Activated CD4-positive, alpha-beta memory T cell treated with anti-CD3 and anti-CD28 coated beads, Interleukin-2, amount 10 ng/mL, durations not matched to agents 7 days and 5 days (primary cell): ENCODE measurements at regions of chr17 and their contacts with region 1.

Region 1: DNA sequence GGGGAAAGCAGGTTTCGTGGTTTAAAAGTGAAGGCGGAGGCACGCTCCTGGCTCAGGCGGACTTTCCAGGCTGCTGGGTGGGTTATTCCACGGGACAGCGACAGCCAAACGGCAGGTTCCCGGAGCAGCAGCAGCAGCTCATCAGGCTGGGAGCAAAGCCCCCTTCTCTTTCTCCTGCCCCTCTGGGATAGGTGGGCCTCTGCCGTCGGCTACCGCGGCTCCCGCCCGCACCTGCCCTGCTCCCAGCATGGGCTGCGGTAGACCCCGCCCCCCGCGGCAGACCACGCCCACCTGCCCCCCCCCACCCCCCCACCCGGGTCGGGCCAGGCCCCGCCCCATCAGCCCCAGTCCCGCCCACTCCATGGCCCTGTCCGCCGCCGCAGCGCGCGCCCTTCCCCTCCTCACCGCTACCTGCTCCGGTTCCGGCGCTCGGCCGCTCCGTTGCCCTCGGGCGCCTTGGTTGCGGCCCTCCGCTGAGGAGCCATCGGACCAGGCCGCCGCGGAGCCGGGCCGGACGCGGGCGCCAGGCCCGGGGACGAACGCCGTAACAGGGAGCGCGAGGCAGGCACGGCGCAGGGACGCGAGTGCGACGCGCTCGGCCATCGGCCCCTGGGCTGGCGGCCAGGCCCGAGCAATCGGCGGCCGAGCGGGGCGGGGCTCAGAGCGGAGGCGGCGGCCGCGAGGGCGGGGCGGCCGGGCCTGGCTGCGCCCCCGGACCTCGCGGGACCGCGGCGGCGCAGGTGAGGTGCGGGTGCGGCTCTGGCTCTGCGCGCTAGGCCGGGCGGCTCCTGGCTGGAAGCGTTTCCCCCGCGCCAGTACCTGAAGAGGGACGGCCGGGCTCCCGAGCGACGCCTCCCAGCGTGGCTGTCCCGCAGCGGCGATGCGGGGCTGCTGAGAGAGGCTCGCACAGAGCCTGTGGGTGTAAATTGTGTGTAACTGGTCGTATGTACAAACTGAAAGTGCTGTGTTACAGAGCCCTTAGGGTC is at the starts of genes HEXD and OGFOD3:
- DNase-seq: peak; percentile 87
- H3K4me3 Mint-ChIP-seq: peak within 1 kb of the TSS; percentile 79
- H3K27ac Mint-ChIP-seq: peak within 1 kb of the TSS; percentile 85
- H3K4me1 Mint-ChIP-seq: peaks cover 31% of the 10 kb centered on the region
- H3K27me3 Mint-ChIP-seq: no peaks in the 10 kb centered on the region
- total RNA-seq, gene HEXD: 58.3 to 60.6 TPM
- total RNA-seq, gene OGFOD3: 26.7 to 29.4 TPM

Region 2: DNA sequence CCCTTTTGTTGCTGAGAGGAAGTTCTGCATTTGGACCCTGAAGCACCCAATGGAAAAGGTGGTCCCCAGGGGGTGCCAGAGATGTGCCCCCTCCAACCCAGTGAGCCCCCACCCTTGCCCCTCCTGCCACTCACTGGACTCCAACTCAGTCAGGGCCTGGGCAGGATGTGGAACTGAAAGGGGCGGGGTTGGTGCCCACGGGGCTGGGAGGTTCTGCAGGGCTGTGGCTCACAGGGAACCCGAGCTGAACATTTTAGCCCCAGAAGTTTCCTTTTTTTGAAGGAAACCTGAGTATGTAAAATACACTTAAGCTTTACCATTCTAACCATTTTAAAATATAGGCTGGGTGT is 15.9 kb after region 1 on chr17:
- CTCF ChIA-PET with region 1: interaction called, 4 read pairs
- POLR2A ChIA-PET with region 1: interaction called, 28 read pairs
- DNase-seq: peak; percentile 71
- H3K4me3 Mint-ChIP-seq: no peak overlapping the region
- H3K27ac Mint-ChIP-seq: peak overlapping the region; percentile 78
- H3K4me1 Mint-ChIP-seq: peaks cover 33% of the 10 kb centered on the region
- H3K27me3 Mint-ChIP-seq: no peaks in the 10 kb centered on the region

Region 3: DNA sequence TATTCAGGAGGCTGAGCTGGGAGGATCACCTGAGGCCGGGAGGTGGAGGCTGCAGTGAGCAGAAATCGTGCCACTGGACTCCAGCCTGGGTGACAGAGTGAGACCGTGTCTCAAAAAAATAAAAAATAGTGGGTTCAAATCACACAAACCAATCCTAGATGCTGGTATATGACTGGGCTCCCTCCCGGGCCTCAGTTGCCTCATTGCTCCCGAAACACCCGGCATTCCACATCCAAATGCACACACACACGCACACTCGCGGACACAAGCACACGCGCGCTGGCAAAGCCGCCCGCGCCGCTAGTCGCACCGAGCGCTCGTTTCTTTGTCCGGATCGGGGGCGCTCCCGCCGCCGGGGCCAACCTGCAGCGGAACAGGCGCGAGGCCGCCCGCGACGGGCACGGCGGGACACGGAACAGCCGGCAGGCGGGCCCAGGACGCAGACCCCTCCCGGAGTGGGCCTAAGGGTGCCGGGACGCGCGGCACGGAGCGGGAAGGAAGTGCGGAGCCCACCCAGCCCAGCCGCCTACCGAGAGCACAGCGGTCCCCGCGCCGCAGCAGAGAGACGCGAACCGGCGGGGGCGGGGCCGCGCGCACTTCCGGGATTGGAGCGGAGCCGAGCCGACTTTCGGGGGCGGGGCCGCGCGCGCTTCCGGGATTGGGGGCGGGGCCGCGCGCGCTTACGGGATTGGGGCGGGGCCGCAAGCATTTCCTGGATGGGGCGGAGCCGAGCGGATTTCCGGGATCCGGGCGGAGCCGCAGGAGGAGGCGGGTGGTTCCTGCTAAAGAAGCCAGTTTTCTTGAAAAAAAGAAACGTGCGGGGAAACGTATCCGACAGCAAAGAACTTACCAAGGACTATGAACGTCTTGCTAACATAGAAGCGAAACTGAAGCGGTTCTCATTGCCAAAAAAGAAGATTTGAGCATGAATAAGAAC is 32.1 kb after region 1 on chr17 and contains the start of gene CYBC1:
- CTCF ChIA-PET with region 1: interaction called, 7 read pairs
- POLR2A ChIA-PET with region 1: interaction called, 31 read pairs
- DNase-seq: peak; percentile 96
- H3K4me3 Mint-ChIP-seq: peak within 1 kb of the TSS; percentile 96
- H3K27ac Mint-ChIP-seq: peak within 1 kb of the TSS; percentile 99
- H3K4me1 Mint-ChIP-seq: peaks cover 49% of the 10 kb centered on the region
- H3K27me3 Mint-ChIP-seq: no peaks in the 10 kb centered on the region
- total RNA-seq, gene CYBC1: 308 to 313 TPM

Region 4: DNA sequence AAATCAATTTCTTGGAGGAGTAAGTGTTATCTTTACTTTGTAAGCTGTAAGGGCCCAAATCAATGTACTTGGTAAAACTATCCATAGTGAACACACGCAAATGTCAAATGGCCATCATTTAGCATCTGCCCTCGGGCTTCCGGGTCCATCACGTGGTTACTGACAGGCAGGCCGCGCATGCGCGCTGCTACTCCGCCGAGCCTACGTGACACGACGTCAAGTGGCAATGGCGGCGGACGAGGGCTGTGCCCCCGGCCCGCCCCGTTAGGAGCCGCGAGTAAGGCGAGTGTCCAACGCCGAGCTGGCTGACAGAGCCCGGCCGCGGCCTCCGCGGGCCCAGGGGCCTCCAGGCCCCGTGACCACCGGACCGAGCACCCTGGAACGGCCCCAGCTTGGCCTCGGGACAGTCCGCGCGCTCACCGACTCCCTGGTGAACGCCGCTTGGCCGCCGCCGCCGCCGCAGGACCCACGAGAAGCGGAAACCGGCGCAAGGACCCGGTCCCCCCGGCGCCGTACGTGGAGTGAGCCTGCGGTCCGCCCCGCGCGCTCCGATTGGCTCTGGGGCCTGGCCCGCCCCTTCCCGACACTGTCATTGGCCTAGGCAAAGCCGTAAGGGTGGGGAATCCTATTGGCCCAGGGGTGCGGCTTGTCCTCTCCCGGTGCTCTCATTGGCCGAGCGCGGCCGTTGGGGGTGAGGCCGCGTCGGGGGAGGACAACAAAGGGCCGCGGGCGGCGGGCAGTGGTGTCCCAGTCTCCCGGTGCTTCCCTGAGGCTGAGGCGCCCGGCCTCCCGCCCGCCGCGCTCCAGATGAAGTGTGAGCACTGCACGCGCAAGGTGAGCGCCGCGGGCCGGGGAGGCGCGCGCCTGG is 39.9 kb after region 1 on chr17 and contains the start of gene NARF:
- CTCF ChIA-PET with region 1: interaction called, 6 read pairs
- POLR2A ChIA-PET with region 1: interaction called, 31 read pairs
- DNase-seq: peak; percentile 97
- H3K4me3 Mint-ChIP-seq: peak within 1 kb of the TSS; percentile 97
- H3K27ac Mint-ChIP-seq: peak within 1 kb of the TSS; percentile 96
- H3K4me1 Mint-ChIP-seq: peaks cover 56% of the 10 kb centered on the region
- H3K27me3 Mint-ChIP-seq: no peaks in the 10 kb centered on the region
- total RNA-seq, gene NARF: 150 to 153 TPM

Region 5: GRCh38 chr17:82528484-82529265 is 110.4 kb after region 1 on chr17:
- CTCF ChIA-PET with region 1: no interaction called
- POLR2A ChIA-PET with region 1: no interaction called
- DNase-seq: no peak
- H3K4me3 Mint-ChIP-seq: no peak overlapping the region
- H3K27ac Mint-ChIP-seq: no peak overlapping the region
- H3K4me1 Mint-ChIP-seq: peaks cover 47% of the 10 kb centered on the region
- H3K27me3 Mint-ChIP-seq: no peaks in the 10 kb centered on the region